CD8-positive, alpha-beta T cell (primary cell): ENCODE measurements at regions of chr3 and their contacts with region 1.

Region 1: DNA sequence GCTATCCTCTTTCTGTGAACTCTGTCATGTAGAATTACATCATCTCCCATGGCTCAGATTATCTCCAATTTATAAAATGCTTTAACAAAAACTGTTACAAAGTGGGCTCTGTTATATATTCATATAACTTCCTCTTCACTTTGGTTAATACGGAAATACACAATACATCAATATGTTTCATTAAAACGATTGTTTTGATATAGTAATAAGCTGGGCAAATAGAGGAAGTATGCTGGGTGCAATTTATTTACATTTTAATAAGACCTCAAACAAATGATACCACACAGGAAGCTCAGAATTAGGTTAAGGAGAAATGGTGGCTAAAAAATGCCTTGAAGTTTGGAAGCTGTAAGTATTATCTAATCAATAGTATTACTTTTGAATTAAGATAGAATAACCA is 331.0 kb downstream of the ZBTB20 start:
- DNase-seq: no peak
- ATAC-seq: no peak
- H3K4me3 ChIP-seq: no peak overlapping the region
- H3K4me3 Mint-ChIP-seq: no peak overlapping the region
- H3K27ac ChIP-seq: no peak overlapping the region
- H3K27ac Mint-ChIP-seq: no peak overlapping the region
- H3K4me1 ChIP-seq: no peaks in the 10 kb centered on the region
- H3K4me1 Mint-ChIP-seq: peaks cover 4% of the 10 kb centered on the region
- H3K27me3 ChIP-seq: no peaks in the 10 kb centered on the region
- H3K27me3 Mint-ChIP-seq: no peaks in the 10 kb centered on the region
- CTCF ChIP-seq: no peak

Region 2: GRCh38 chr3:114308830-114309229 is 507.2 kb before region 1 on chr3:
- CTCF ChIA-PET with region 1: no interaction called
- POLR2A ChIA-PET with region 1: no interaction called
- intact Hi-C with region 1: no loop called
- DNase-seq: peak; percentile 14 to 88 (median 51)
- ATAC-seq: peak; percentile 82
- H3K4me3 ChIP-seq: no peak overlapping the region
- H3K4me3 Mint-ChIP-seq: peak overlapping the region; percentile 38
- H3K27ac ChIP-seq: peak overlapping the region; percentile 55 to 91
- H3K27ac Mint-ChIP-seq: peak overlapping the region; percentile 87
- H3K4me1 ChIP-seq: peaks cover 30% of the 10 kb centered on the region
- H3K4me1 Mint-ChIP-seq: peaks cover 56% of the 10 kb centered on the region
- H3K27me3 ChIP-seq: no peaks in the 10 kb centered on the region
- H3K27me3 Mint-ChIP-seq: no peaks in the 10 kb centered on the region
- CTCF ChIP-seq: no peak

Region 3: DNA sequence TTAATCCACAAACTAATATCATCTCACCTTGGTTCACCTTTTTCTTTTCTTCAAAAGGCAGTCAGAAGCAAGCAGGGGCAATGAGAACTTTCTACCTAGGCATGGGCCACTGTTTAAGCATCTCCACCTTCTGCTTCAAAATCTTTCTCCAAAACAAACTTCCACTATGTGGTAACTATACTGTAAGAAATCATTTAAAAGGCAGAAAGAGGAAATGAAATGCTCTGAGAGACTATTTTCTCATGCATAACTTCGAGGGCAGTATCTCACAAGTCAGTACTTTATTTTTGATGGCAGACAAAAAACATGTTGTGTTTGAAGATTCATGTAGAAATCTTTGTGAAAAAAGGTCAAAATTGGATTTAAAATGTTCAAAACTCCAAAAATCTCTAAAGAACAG is 88.7 kb before region 1 on chr3:
- CTCF ChIA-PET with region 1: no interaction called
- POLR2A ChIA-PET with region 1: no interaction called
- intact Hi-C with region 1: no loop called
- DNase-seq: no peak
- ATAC-seq: no peak
- H3K4me3 ChIP-seq: no peak overlapping the region
- H3K4me3 Mint-ChIP-seq: no peak overlapping the region
- H3K27ac ChIP-seq: no peak overlapping the region
- H3K27ac Mint-ChIP-seq: no peak overlapping the region
- H3K4me1 ChIP-seq: no peaks in the 10 kb centered on the region
- H3K4me1 Mint-ChIP-seq: peaks cover 16% of the 10 kb centered on the region
- H3K27me3 ChIP-seq: no peaks in the 10 kb centered on the region
- H3K27me3 Mint-ChIP-seq: no peaks in the 10 kb centered on the region
- CTCF ChIP-seq: no peak

Region 4: GRCh38 chr3:114863848-114864247 is 47.8 kb after region 1 on chr3:
- CTCF ChIA-PET with region 1: no interaction called
- POLR2A ChIA-PET with region 1: no interaction called
- intact Hi-C with region 1: loop called in 1 of 2 experiments (anchors 1 kb)
- DNase-seq: peak in 2 of 9 experiments; percentile 6 to 22
- ATAC-seq: no peak
- H3K4me3 ChIP-seq: peak overlapping the region; percentile 14 to 36
- H3K4me3 Mint-ChIP-seq: peak overlapping the region; percentile 72
- H3K27ac ChIP-seq: peak overlapping the region in 1 of 2 experiments; percentile 51
- H3K27ac Mint-ChIP-seq: peak overlapping the region; percentile 82
- H3K4me1 ChIP-seq: peaks cover 3% of the 10 kb centered on the region
- H3K4me1 Mint-ChIP-seq: peaks cover 49% of the 10 kb centered on the region
- H3K27me3 ChIP-seq: no peaks in the 10 kb centered on the region
- H3K27me3 Mint-ChIP-seq: no peaks in the 10 kb centered on the region
- CTCF ChIP-seq: no peak

Region 5: DNA sequence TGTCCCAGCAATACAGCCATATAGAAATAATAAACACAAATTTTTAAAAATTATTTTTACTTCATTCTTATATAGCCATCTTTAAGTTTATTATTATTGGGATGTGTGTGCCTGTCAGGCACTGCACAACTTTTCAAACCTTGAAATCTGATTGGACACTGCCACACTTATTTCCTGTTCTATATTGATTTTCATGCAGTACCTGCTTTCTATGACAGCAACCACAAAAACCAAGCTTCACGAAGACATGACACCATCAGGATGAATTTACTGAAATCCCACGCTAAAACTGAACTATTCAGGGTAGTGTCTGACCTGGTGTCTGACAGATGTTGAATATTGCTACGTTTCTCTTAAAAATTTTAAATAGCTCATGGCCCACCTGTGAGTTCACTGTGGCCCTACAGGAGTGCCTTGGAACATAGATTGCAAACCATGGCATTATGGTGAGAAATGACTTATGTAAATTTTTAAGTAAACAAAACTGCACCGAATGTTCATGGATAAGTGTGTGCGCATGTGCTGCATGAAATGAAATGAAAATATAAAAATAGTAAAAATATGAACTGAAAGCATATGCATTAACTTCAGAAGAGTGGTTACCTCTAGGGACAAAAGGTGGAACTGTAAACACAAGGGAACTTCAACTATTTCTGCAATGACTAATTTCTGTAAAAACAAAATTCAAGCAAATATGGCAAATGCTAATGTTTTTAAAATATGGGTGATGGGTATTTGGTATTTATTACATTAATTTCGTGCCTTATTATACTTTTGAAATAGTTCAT is 178.7 kb after region 1 on chr3:
- CTCF ChIA-PET with region 1: no interaction called
- POLR2A ChIA-PET with region 1: no interaction called
- intact Hi-C with region 1: no loop called
- DNase-seq: no peak
- ATAC-seq: no peak
- H3K4me3 ChIP-seq: no peak overlapping the region
- H3K4me3 Mint-ChIP-seq: no peak overlapping the region
- H3K27ac ChIP-seq: no peak overlapping the region
- H3K27ac Mint-ChIP-seq: no peak overlapping the region
- H3K4me1 ChIP-seq: no peaks in the 10 kb centered on the region
- H3K4me1 Mint-ChIP-seq: peaks cover 3% of the 10 kb centered on the region
- H3K27me3 ChIP-seq: no peaks in the 10 kb centered on the region
- H3K27me3 Mint-ChIP-seq: no peaks in the 10 kb centered on the region
- CTCF ChIP-seq: no peak